ENCODE measurements at regions of chr12 and their contacts with region 1.

Region 1: DNA sequence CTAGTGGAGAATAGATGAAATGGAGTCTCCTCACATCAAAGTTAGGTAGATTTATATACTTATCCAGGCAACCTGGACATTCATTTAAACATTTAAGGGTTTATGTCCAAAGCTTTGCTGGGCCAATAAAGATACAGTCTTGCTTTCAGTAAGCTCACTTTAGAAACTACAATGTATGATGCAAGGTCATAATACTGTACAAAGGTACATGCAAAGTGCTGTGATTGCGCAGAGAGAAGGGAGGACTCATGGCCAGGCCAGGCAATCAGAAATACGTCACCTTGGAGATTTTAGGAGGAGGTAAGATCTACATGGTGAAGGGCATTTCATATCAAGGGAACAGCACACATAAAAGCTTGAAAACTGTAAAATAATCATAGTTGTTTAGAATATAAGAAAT is 113.6 kb downstream of the FGD4 start:
- DNase-seq: no peak

Region 2: GRCh38 chr12:32478858-32479725 is 33.8 kb before region 1 on chr12:
- in situ Hi-C with region 1: loop called (anchors 5 kb)
- DNase-seq: peak; percentile 51

Region 3: DNA sequence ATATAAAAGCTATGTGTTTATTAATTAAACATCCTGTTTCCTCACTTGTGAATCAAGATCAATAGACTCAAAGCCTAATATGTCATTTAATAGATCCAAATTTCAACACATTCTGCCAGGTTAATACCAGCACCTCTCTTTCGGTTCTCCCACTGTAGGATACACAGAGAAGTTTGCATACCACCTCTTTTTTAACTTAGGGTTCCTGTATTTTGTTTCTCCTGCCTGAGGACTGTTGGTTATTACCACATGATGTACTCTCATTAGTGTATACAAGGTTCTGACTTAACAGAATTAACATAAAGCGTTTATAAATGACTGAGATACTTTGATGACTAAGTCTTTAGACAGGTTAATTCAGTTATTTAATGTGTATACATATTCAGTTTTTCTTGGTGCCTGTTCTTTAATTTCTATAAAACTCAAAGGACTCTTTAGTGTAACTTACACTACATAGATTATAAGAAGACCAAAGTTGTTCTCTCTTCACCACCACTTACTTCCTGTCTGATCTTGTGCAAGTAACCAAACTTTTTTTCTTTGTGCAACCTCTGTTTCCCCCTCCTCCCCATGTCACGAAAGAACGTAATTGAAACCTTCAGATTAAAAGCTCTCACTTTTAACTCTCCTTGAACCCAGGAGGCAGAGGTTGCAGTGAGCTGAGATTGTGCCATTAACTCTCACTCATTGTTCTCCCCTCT is 76.4 kb after region 1 on chr12:
- in situ Hi-C with region 1: no loop called
- DNase-seq: no peak

Measured in Caki2 (cell line).